Right ventricle myocardium inferior (tissue), 1 donor: ENCODE measurements at regions of chr15 and their contacts with region 1.

Region 1: GRCh38 chr15:40044717-40045571 is 6.0 kb upstream of the SRP14 start:
- DNase-seq: peak; percentile 95
- ATAC-seq: peak; percentile 95

Region 2: DNA sequence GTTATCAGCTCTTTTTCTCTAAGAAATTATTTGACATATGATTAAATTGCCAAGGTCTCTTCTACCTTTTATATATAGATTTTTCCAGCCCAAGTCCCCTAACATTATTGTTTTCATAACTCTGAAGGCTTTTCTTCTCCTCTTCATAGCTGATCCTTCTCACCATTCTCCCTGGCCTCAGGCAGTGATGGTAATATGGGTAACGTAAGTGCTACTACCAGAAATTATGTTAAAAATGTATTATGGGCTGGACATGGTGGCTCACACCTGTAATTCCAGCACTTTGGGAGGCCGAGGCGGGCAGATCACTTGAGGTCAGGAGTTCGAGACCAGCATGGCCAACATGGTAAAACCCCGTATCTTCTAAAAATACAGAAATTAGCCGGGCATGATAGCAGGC is 34.5 kb after region 1 on chr15:
- intact Hi-C with region 1: loop called (anchors 1 kb)
- DNase-seq: no peak
- ATAC-seq: no peak

Region 3: DNA sequence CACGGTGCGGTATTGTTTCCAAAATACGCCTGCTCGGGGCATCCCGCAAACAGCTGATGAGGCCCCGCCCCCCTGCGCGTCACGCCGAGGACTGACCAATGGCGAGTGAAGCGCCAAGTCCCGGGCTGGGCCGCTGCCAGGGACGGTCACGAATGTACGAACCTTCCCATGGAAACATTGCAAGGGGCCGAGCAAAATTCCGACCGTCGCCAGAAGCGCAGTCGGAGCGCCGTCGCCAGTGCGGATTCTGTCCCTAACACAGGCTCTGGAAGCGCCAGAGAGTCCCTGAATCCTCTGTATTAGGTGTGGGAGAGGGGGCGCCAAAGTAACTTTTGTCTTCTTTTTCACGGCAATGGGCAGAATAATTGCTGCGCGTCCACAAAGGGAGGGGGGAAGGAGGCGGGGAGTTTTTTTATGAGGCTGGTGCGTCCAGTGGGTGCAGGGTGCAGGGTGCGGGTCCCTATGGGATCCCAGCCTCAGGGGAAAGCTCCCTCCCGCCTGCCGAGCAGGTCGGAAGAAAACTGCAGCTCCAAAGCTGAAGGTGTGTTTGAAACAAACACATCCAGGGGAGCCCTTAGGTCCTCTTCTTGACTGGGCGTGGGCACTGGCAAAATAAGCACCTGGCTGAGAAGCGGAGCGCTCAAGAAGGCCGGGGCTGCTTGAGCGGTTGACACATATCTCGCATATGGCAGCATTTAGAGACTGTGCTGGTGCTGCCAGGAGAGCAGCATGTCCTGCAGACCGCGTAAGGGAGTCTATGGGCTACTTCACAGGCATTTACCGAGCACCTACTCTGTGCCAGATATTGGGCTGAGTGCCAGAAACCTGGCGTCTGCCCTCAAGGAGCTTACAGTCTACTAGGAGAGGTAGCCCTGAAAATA is 64.2 kb after region 1 on chr15 and contains the start of gene BMF:
- intact Hi-C with region 1: loop called (anchors 2 kb)
- DNase-seq: peak; percentile 100
- ATAC-seq: peak; percentile 80
- total RNA-seq, gene BMF: 3.2 TPM

Region 4: DNA sequence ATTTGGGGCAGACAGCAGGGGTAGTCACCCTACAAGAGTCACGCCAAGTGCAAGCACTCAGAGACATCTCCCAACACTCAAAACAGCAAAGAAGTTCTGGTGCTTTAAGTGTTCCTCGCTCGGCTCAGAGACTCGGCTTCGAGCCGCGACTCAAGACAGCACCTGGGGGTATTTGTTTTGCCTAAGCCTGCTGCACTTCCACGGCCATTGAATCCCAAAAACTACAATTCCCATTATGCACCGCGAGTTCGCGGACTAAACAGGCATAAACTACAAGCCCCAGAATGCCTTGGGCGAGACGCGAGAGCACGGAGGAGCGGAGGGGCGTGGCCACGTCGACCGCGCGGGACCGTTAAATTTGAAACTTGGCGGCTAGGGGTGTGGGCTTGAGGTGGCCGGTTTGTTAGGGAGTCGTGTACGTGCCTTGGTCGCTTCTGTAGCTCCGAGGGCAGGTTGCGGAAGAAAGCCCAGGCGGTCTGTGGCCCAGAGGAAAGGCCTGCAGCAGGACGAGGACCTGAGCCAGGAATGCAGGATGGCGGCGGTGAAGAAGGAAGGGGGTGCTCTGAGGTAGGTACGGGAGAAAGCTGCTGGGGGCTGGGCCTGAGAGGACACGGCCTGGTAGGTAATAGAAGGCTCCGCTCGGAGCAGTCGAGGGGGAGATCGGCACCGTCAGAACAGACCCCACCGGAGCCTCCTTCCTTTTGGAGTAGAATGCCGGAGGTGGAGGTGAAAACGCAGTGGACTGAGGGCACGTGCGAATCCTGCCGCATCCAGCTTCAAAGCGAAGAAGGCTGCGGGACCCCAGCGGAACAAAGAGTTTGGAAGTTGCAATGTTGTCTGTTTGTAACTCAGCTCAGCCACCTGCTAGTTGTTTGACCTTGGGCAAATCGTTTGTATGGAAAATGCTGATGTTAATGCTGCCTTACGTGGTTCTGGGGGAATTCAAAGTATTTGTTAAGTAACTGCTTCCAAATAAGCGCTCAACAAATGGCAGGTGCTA is 116.0 kb after region 1 on chr15 and contains the start of gene BUB1B:
- intact Hi-C with region 1: loop called (anchors 5 kb)
- DNase-seq: peak; percentile 93
- ATAC-seq: peak; percentile 96
- total RNA-seq, gene BUB1B: 2.4 TPM

Region 5: DNA sequence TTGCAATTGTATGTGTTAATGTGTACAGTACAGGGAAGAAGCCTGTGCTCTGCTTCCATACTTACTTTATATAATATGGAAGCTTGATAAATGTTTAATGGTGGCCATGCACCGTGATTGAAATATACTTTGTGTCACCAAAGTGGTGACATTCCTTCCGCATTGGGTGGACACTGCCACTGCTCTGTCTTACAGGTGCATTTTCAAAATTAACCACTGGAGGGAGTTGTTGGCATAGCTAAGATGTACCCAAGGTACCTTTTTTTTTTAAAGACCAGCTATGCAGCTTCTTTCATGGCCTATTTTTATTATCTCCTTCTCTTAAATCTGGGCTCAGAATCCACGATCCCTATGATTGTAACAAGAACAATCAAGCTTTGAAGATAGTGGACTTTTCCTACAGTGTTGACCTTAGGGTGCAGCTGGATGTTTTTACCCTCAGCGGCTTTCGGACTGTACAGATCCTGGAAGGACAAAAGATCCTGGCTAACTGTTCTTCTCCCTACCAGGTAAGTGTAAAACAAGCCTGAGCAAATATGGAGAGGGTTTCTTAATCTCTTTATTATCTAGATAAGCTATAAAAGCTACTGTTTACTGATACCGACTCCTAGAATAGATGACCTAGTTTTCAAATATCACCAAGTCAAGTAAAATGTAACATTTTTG is 172.3 kb after region 1 on chr15:
- intact Hi-C with region 1: loop called (anchors 1 kb)
- DNase-seq: no peak
- ATAC-seq: peak; percentile 80

Region 6: GRCh38 chr15:40274350-40275274 is 229.7 kb after region 1 on chr15:
- intact Hi-C with region 1: loop called (anchors 2 kb)
- DNase-seq: peak; percentile 93
- ATAC-seq: peak; percentile 63